ENCODE measurements at regions of chr5 and their contacts with region 1.

Region 1: DNA sequence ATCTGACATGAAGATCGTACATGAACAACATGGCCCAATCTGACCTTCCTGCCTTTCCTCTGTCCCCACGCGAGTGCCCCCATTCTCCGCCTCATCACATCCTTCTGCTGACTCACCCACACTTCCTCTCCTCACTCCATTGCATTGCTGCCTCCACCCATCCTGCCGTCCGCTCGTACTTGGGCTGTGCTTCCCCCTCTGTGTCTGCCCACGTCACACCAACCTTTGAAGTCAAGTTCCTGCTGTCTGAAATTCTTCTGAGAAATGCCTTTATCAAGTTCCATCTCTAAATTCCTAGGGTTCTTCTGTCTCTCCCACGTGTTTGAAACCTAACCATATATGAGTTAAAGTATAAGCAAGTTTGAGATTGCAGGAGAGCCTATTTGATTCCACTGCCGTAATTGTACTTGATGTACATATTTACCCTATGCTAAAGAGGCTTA is 18.0 kb upstream of the STARD4 start:
- DNase-seq: peak; percentile 93

Region 2: GRCh38 chr5:111158105-111158744 is 372.1 kb before region 1 on chr5:
- intact Hi-C with region 1: loop called in 1 of 2 experiments (anchors 5 kb)
- DNase-seq: no peak